SK-N-SH (cell line): ENCODE measurements at regions of chr20 and their contacts with region 1.

Region 1: GRCh38 chr20:8389381-8390036 is 257.4 kb downstream of the PLCB1 start:
- DNase-seq: peak; percentile 27
- H3K4me3 ChIP-seq: no peak overlapping the region; a peak in 1 of 4 replicates
- H3K27ac ChIP-seq: peak overlapping the region; percentile 58 to 88
- H3K4me1 ChIP-seq: peaks cover 14 to 22% of the 10 kb centered on the region in 2 experiments; a peak in 3 of 4 replicates
- H3K27me3 ChIP-seq: no peaks in the 10 kb centered on the region
- CTCF ChIP-seq: peak; percentile 70
- EP300 ChIP-seq: 0 out of 4 replicates have a peak, but pooled peaks of 1 of the 2 experiments have one; percentile 14
- RAD21 ChIP-seq: peak; percentile 64

Region 2: DNA sequence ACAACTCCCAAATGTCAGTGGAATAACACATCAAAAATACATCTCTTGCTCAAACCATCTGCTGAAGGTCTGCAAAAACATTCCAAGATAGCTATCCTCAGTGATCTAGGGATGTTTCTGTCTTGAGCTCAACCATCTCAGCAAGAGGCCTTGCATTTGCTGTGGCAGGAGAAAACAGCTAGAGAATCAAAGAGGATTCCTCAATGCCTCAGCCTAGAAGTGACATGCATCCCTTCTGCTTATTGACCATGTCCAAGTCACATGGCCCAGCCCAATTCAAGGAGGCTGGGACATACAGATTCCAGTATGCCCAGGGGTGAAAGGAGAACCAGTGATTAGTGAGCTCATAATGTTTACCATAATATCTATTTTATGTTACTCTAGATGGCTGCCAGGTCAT is 12.0 kb after region 1 on chr20:
- CTCF ChIA-PET with region 1: interaction called, 14 read pairs
- POLR2A ChIA-PET with region 1: no interaction called
- DNase-seq: no peak
- H3K4me3 ChIP-seq: no peak overlapping the region
- H3K27ac ChIP-seq: peak overlapping the region in 1 of 2 experiments; percentile 16; a peak in 1 of 4 replicates
- H3K4me1 ChIP-seq: peaks cover 0 to 15% of the 10 kb centered on the region in 2 experiments; a peak in 3 of 4 replicates
- H3K27me3 ChIP-seq: no peaks in the 10 kb centered on the region
- CTCF ChIP-seq: no peak
- EP300 ChIP-seq: no peak
- RAD21 ChIP-seq: no peak